HCT116 (cell line): ENCODE measurements at regions of chr4 and their contacts with region 1.

Region 1: GRCh38 chr4:10554694-10555093 is 97.5 kb upstream of the ZNF518B start:
- DNase-seq: peak; percentile 56
- ATAC-seq: peak; percentile 95
- H3K4me3 ChIP-seq: 0 out of 4 replicates have a peak overlapping the region, but pooled peaks of 1 of the 2 experiments have one; percentile 4
- H3K27ac ChIP-seq: no peak overlapping the region
- H3K4me1 ChIP-seq: peaks cover 3 to 5% of the 10 kb centered on the region in 2 experiments; a peak in 2 of 4 replicates
- H3K27me3 ChIP-seq: no peaks in the 10 kb centered on the region
- CTCF ChIP-seq: peak; percentile 61 to 82 (median 72); a peak in 5 of 6 replicates
- POLR2A ChIP-seq: no peak
- RAD21 ChIP-seq: peak; percentile 88

Region 2: GRCh38 chr4:9762823-9763475 is 791.7 kb before region 1 on chr4:
- CTCF ChIA-PET with region 1: no interaction called
- POLR2A ChIA-PET with region 1: no interaction called
- RAD21 ChIA-PET with region 1: no interaction called
- intact Hi-C with region 1: loop called (anchors 10 kb)
- DNase-seq: peak; percentile 70
- ATAC-seq: peak; percentile 72
- H3K4me3 ChIP-seq: no peak overlapping the region
- H3K27ac ChIP-seq: no peak overlapping the region
- H3K4me1 ChIP-seq: no peaks in the 10 kb centered on the region
- H3K27me3 ChIP-seq: 0 out of 2 replicates have a peak, but pooled peaks cover 3% of the 10 kb centered on the region
- CTCF ChIP-seq: peak; percentile 66 to 89 (median 75)
- POLR2A ChIP-seq: no peak
- RAD21 ChIP-seq: peak; percentile 91

Region 3: DNA sequence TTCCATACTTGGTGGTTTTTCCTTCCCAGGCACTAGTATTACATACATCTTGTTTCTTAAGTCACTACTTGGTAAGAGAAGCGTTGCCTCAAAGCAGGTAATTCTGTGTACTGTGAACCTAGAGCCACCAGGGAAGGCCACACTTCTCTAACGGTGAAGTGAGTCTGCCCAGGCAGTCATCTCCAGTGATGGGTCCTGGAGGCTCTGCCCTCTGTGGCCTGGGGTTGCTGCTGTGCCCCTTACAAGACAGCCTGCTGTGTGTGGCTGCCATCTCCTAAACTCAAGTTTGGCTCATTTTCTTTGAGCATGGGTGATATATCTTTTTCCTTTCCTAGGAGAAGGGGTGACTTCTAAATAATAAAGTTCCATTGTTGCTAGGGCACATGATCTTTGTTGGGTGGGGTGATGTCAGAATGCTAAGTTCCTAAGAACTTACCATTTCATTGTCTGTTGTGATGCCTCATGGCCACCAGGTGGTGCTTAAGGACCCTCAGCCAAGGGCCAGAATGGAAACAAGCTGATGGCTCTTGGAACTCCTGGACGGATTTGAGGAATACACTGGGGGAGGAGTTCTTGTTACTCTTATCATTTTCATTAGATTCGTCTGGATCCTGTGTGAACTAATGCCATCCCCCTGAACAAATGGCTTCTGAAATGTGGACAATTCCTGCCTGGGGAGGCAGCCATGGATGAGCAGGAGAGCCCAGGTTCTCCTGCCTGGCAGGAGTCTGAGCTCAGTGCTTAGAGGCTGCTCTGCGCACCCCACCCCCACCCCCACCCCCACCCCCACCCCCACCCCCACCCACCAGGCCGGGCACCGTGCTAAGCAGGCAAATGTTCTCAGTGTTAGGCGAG is 397.0 kb before region 1 on chr4:
- CTCF ChIA-PET with region 1: interaction called, 8 read pairs
- POLR2A ChIA-PET with region 1: no interaction called
- RAD21 ChIA-PET with region 1: no interaction called
- intact Hi-C with region 1: loop called (anchors 1 kb)
- DNase-seq: peak; percentile 73
- ATAC-seq: peak; percentile 93
- H3K4me3 ChIP-seq: no peak overlapping the region
- H3K27ac ChIP-seq: no peak overlapping the region
- H3K4me1 ChIP-seq: peaks cover 3 to 8% of the 10 kb centered on the region in 2 experiments; a peak in 2 of 4 replicates
- H3K27me3 ChIP-seq: peaks cover 9% of the 10 kb centered on the region; the same call in 1 of the 2 replicates
- CTCF ChIP-seq: peak; percentile 83 to 87 (median 86)
- POLR2A ChIP-seq: no peak
- RAD21 ChIP-seq: peak; percentile 85

Region 4: GRCh38 chr4:10164877-10165283 is 389.8 kb before region 1 on chr4:
- CTCF ChIA-PET with region 1: interaction called, 8 read pairs
- POLR2A ChIA-PET with region 1: no interaction called
- RAD21 ChIA-PET with region 1: no interaction called
- intact Hi-C with region 1: loop called (anchors 1 kb)
- DNase-seq: peak; percentile 44
- ATAC-seq: peak; percentile 79
- H3K4me3 ChIP-seq: no peak overlapping the region
- H3K27ac ChIP-seq: no peak overlapping the region
- H3K4me1 ChIP-seq: no peaks in the 10 kb centered on the region
- H3K27me3 ChIP-seq: no peaks in the 10 kb centered on the region
- CTCF ChIP-seq: peak; percentile 61 to 73 (median 71); a peak in 5 of 6 replicates
- POLR2A ChIP-seq: no peak
- RAD21 ChIP-seq: peak; percentile 70